ENCODE measurements at regions of chr11 and their contacts with region 1.

Region 1: GRCh38 chr11:112814168-112814567 is 147.1 kb upstream of the NCAM1 start:
- DNase-seq: no peak
- ATAC-seq: no peak
- H3K4me3 ChIP-seq: no peak overlapping the region
- H3K27ac ChIP-seq: no peak overlapping the region
- H3K4me1 ChIP-seq: no peaks in the 10 kb centered on the region
- H3K27me3 ChIP-seq: no peaks in the 10 kb centered on the region
- CTCF ChIP-seq: no peak

Region 2: DNA sequence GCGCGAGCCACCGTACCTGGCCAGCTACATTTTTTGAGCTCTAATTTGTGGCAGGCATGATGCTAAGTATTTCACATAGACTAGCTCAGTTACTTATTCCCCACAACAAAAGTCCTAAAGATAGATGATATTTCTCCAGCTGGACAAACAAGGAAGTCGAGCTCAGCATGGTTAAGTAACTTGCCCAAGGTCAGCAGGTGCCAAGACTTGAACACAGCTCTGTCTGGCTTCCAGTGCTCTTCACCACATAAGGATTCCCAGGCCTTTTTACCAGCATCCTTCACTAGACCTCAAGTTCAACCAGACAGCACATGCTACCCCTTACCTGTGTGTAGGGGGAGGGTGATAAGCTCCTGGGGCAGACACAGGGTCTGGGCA is 30.2 kb before region 1 on chr11:
- CTCF ChIA-PET with region 1: no interaction called
- POLR2A ChIA-PET with region 1: no interaction called
- in situ Hi-C with region 1: no loop called
- intact Hi-C with region 1: loop called (anchors 1 kb)
- DNase-seq: no peak
- ATAC-seq: no peak
- H3K4me3 ChIP-seq: no peak overlapping the region
- H3K27ac ChIP-seq: no peak overlapping the region
- H3K4me1 ChIP-seq: no peaks in the 10 kb centered on the region
- H3K27me3 ChIP-seq: peaks cover 21% of the 10 kb centered on the region
- CTCF ChIP-seq: no peak

Region 3: GRCh38 chr11:112911124-112911523 is 97.0 kb after region 1 on chr11:
- CTCF ChIA-PET with region 1: no interaction called
- POLR2A ChIA-PET with region 1: no interaction called
- in situ Hi-C with region 1: no loop called
- intact Hi-C with region 1: no loop called
- DNase-seq: no peak
- ATAC-seq: no peak
- H3K4me3 ChIP-seq: no peak overlapping the region
- H3K27ac ChIP-seq: no peak overlapping the region
- H3K4me1 ChIP-seq: no peaks in the 10 kb centered on the region
- H3K27me3 ChIP-seq: no peaks in the 10 kb centered on the region
- CTCF ChIP-seq: no peak